ENCODE measurements at regions of chr6 and their contacts with region 1.

Region 1: DNA sequence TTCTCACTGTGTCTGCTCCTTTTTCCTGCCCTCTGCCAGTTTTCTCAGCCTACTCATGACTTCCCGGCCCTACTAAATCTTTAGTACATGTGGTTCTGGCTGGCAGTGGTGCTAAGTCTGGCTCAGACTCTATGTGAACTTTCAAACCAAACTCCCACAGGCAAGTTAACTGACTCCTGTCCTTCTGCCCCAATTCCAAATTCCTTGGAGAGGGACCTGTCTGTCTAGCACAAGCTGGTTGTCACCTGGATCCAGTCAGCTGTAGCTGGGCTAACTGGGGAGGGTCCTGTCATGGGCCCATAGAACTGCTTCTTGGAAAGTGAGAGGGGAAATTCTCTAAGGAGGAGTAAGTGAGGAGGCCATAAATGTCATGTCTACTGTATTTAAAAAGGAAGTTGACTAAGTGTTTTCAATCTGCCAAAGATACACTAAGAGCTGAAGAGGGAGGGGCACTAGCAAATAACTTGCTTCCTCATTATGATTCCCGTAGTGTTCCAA is 240.1 kb downstream of the KCNQ5 start:
- DNase-seq: peak; percentile 71 to 81
- ATAC-seq: peak; percentile 86 to 89
- H3K4me3 ChIP-seq: no peak overlapping the region
- H3K27ac ChIP-seq: peak overlapping the region; percentile 75 to 89 (median 86)
- H3K4me1 ChIP-seq: peaks cover 48 to 61% of the 10 kb centered on the region in 2 donors
- H3K27me3 ChIP-seq: no peaks in the 10 kb centered on the region
- CTCF ChIP-seq: no peak
- POLR2A ChIP-seq: no peak

Region 2: GRCh38 chr6:72740135-72740534 is 121.8 kb before region 1 on chr6:
- in situ Hi-C with region 1: loop called in 1 of 4 experiments (anchors 10 kb)
- intact Hi-C with region 1: loop called (anchors 2 kb)
- DNase-seq: no peak
- ATAC-seq: no peak
- H3K4me3 ChIP-seq: no peak overlapping the region
- H3K27ac ChIP-seq: peak overlapping the region in 3 of 4 donors; percentile 11 to 86 (median 78)
- H3K4me1 ChIP-seq: peaks cover 27 to 35% of the 10 kb centered on the region in 2 donors
- H3K27me3 ChIP-seq: no peaks in the 10 kb centered on the region
- CTCF ChIP-seq: no peak
- POLR2A ChIP-seq: no peak

Region 3: DNA sequence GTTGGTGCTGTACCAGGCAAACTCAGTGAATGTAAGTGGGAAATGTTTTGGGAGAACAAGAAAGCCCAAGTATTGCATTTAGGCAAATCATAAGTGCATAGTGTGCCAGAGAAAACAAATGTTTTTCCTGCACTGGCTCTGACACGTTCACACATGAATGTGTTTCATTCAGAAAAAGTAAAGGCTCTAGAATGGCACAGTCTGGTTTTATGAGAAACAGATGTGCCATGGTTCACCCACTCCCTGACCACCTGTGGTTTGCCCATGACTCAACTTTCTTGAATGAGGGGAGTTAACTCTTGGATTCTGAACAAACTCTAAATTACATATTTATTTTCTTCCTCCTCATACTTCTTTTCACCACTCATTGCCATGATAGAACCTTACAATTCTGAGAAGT is 113.2 kb before region 1 on chr6:
- in situ Hi-C with region 1: loop called in 1 of 4 experiments (anchors 10 kb)
- intact Hi-C with region 1: loop called (anchors 2 kb)
- DNase-seq: no peak
- ATAC-seq: no peak
- H3K4me3 ChIP-seq: no peak overlapping the region
- H3K27ac ChIP-seq: no peak overlapping the region
- H3K4me1 ChIP-seq: peaks cover 18 to 26% of the 10 kb centered on the region in 2 donors
- H3K27me3 ChIP-seq: no peaks in the 10 kb centered on the region
- CTCF ChIP-seq: no peak
- POLR2A ChIP-seq: no peak

Region 4: GRCh38 chr6:72819609-72820008 is 42.4 kb before region 1 on chr6:
- in situ Hi-C with region 1: no loop called
- intact Hi-C with region 1: loop called (anchors 1 kb)
- DNase-seq: peak; percentile 76 to 89
- ATAC-seq: peak; percentile 99 to 100
- H3K4me3 ChIP-seq: no peak overlapping the region
- H3K27ac ChIP-seq: peak overlapping the region; percentile 83 to 84 (median 83)
- H3K4me1 ChIP-seq: peaks cover 48 to 55% of the 10 kb centered on the region in 2 donors
- H3K27me3 ChIP-seq: no peaks in the 10 kb centered on the region
- CTCF ChIP-seq: no peak
- POLR2A ChIP-seq: no peak

Region 5: DNA sequence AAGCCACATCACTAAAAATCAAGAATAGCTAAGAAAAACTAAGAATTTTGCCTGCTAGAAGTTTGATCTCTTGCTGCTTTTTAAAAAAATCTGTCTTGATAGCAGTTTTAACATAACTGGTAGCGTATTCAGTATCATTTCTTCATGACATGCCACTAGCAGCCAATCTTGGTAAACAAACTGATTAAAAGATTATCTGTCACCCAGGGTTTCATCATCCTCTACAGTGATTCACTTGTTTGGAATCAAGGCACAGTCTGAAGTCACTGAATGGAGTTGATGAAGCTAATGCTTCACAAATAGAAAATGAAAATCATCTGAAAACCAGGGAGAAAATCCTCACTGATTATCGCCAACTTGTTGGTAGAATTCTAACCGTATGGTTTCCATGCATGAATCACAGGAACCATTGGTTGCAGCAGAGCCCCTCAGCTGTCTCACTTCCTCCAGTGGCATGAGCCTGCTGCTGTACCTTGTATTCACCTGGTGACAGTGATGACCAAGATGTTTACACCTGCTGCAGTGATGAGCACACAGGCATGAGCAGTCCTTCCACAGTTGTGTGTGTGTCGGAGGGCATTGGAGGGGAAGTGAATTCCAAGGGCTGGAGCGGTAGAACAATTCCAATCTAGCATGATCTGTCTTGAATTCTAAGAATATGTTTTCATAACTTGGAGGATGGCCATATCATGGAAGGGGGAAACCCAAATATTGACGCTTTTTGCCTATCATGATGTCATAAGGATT is 88.3 kb after region 1 on chr6:
- in situ Hi-C with region 1: loop called in 1 of 4 experiments (anchors 10 kb)
- intact Hi-C with region 1: loop called (anchors 2 kb)
- DNase-seq: peak; percentile 10 to 27
- ATAC-seq: peak; percentile 93 to 97
- H3K4me3 ChIP-seq: peak overlapping the region in 2 of 4 donors; percentile 0 to 10
- H3K27ac ChIP-seq: peak overlapping the region; percentile 73 to 83 (median 80)
- H3K4me1 ChIP-seq: peaks cover 50 to 78% of the 10 kb centered on the region in 2 donors
- H3K27me3 ChIP-seq: no peaks in the 10 kb centered on the region
- CTCF ChIP-seq: no peak
- POLR2A ChIP-seq: no peak

Region 6: DNA sequence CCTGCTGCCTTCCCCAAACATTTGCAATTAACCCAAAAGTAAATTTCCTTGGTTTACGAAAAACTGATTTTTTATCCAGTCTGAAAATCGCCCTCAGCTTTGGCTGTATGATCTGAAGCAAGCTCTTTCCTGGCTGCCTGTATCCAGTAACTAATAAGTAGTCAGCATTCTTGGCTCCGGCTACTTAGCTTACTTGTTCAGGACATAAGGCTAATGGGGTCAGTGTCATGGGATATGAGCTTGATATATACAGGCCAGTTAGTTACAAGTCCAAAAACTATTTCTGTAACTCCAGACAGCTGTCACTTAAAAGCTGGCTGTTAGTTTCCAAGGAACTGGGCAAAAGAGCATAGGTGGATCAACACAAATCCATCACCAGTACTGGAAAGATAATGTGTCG is 307.1 kb after region 1 on chr6:
- in situ Hi-C with region 1: no loop called
- intact Hi-C with region 1: loop called (anchors 10 kb)
- DNase-seq: peak; percentile 43 to 52
- ATAC-seq: peak; percentile 97 to 100
- H3K4me3 ChIP-seq: peak overlapping the region in 1 of 4 donors; percentile 3
- H3K27ac ChIP-seq: peak overlapping the region; percentile 70 to 78 (median 73)
- H3K4me1 ChIP-seq: peaks cover 14 to 28% of the 10 kb centered on the region in 2 donors
- H3K27me3 ChIP-seq: no peaks in the 10 kb centered on the region
- CTCF ChIP-seq: no peak
- POLR2A ChIP-seq: no peak

Region 7: GRCh38 chr6:73203098-73203497 is 341.1 kb after region 1 on chr6:
- in situ Hi-C with region 1: no loop called
- intact Hi-C with region 1: no loop called
- DNase-seq: no peak
- ATAC-seq: no peak
- H3K4me3 ChIP-seq: no peak overlapping the region
- H3K27ac ChIP-seq: no peak overlapping the region
- H3K4me1 ChIP-seq: peaks cover 0 to 8% of the 10 kb centered on the region in 2 donors
- H3K27me3 ChIP-seq: no peaks in the 10 kb centered on the region
- CTCF ChIP-seq: no peak
- POLR2A ChIP-seq: no peak